PC-3 (cell line): ENCODE measurements at regions of chr2 and their contacts with region 1.

Region 1: DNA sequence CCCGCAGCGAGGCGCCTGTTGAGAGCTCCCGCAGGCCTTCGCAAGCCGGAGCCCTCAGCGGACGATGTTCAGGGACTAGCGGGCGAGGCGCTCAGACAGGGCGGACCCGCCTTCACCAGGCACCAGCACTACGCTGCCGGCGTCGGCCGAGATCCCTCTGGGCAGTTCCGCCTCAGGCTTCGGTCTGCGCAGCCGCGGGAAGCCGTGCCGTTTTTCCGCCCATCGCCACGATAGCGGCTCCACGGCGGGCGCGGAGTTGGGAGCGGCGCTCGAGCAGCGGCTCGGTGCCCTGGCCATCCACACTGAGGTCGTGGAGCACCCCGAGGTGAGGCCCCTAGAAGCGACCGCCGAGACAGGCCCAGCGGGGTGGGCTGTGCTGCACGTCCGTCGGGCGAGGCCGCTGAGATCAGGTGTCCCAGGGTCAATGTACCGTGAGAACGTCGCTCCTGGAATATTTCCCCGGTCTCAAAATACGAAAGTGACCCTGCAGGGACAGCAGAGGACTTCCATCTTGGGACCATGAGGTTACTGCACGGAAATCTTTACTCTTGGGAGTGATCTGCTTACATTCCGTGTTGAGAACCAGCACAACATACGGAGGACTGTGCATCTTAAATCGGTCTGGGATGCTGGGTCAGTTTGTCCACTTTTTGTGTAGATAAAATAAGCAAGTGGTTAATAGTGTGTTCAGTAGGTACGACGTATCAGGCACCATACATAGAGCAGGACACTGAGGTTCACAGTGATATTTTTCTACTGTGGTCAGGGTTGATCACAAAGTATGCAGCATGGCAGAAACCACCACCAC is 13.3 kb upstream of the MTIF2 start:
- DNase-seq: peak; percentile 80
- ATAC-seq: peak; percentile 96
- H3K4me3 ChIP-seq: peak overlapping the region; percentile 84
- H3K27ac ChIP-seq: peak overlapping the region; percentile 57
- H3K4me1 ChIP-seq: peaks cover 17% of the 10 kb centered on the region
- H3K27me3 ChIP-seq: no peaks in the 10 kb centered on the region
- CTCF ChIP-seq: no peak

Region 2: DNA sequence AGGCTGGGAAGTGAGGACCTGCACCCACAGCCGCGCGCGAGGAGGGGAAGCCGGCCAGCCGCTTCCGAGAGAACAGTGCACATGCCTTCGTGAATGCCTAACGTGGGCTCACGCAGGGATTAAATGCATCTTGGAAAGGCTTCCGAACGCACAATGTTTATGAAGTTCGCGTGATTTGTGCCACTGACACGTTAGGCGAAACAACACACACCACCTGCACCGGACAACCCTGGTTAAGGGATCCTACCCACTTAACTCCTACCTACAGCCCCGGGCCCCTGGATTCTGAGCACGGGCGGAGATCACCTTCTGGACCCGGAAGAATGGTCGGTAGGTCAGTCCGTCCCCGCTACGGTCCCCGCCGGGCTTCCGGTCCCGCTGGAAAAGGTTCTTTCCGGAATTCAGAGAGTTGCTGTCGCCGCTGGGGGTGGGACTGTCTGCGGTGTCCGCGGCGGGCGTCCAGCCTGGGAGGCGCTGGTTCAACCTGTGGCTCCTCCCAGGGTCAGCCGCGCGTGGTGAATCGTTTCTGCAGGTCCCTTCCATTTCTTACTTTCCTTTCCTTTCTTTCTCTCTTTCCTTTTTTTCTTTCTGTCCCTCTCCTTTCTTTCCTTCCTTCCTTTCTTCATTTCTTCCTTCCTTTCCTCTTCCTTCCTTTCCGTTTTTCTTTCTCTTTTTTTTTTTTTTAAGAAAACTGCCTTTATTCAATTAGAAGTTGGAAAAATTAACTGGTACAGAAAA is 13.2 kb before region 1 on chr2 and contains the start of gene MTIF2:
- CTCF ChIA-PET with region 1: no interaction called
- POLR2A ChIA-PET with region 1: no interaction called
- intact Hi-C with region 1: loop called (anchors 1 kb)
- DNase-seq: peak; percentile 97
- ATAC-seq: peak; percentile 98
- H3K4me3 ChIP-seq: peak within 1 kb of the TSS; percentile 90
- H3K27ac ChIP-seq: peak within 1 kb of the TSS; percentile 57
- H3K4me1 ChIP-seq: peaks cover 12% of the 10 kb centered on the region
- H3K27me3 ChIP-seq: no peaks in the 10 kb centered on the region
- CTCF ChIP-seq: no peak
- total RNA-seq, gene MTIF2: 46.5 and 49.6 TPM in 2 replicates

Region 3: DNA sequence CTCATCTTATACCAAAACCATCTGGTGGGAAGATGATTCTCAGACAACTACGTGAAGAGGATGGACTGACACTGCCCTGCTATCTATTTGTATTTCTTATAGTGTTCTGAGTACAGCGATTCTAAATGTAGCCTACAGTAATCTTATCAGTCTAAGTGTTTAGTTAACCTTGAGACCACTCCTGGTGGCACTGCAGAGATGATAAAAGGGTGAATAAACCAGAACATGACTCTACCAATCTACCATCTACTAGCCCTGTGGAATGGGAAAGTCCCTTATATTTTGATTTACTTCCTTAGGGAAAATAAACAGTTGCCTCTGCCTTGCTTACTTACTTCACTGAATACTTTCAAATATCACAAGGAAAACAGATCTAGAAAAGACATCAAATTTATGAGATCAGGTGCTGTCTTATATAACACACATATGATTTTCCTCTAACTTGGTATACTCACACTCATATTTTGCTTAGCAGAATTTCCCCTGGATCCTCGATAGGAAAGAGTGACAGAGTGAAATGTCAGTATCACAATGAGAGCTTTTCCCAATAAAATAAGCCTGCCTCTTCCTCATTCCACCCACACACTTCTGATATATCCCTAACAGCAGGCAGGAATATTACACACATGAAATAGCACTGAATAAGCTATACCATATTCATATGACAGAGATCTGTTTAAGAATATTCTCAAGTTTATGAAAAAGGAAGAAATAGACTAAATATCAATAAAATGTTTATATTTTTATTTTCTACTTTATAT is 45.3 kb after region 1 on chr2:
- CTCF ChIA-PET with region 1: no interaction called
- POLR2A ChIA-PET with region 1: no interaction called
- intact Hi-C with region 1: no loop called
- DNase-seq: no peak
- ATAC-seq: no peak
- H3K4me3 ChIP-seq: no peak overlapping the region
- H3K27ac ChIP-seq: no peak overlapping the region
- H3K4me1 ChIP-seq: no peaks in the 10 kb centered on the region
- H3K27me3 ChIP-seq: no peaks in the 10 kb centered on the region
- CTCF ChIP-seq: no peak

Region 4: DNA sequence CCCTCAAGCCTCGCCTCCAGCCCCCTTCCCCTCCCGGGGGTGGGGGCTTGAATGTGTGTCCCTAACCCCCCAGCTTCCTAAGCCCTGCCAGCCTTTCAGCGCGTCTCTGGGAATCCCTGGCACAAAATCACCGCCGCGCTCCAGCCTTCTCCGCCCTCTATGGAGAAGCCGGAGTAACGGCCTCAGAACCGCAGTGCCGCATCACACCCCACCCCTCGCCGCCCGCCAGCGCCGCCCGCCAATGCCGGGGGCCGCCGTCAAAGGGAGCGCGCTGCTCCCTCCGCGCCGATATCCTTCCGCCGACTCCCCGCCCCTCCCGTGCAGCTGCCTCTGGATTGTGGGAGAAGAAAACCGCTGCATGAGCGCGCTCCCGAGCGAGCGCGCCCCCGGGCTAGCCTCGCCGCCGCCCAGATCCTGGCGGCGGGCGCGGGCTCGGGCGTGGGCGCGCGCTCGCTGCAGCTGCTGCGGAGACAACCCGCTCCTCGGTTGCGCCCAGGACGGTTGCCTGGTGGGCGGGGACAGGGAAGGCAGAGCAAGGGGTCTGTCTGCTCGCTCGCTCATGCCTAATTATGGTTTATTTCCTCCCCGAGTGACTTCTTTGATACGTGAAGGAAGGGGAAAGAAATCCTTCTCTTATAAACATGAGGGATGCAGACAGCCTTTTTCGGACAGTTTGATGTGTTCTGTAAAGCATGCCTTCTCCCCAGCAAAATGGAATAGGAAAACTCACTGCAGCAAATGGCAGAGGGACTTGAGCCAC is 137.5 kb after region 1 on chr2 and contains the start of gene CCDC88A:
- CTCF ChIA-PET with region 1: no interaction called
- POLR2A ChIA-PET with region 1: no interaction called
- intact Hi-C with region 1: loop called (anchors 2 kb)
- DNase-seq: peak; percentile 94
- ATAC-seq: peak; percentile 91
- H3K4me3 ChIP-seq: peak within 1 kb of the TSS; percentile 82
- H3K27ac ChIP-seq: no peak within 1 kb of the TSS
- H3K4me1 ChIP-seq: peaks cover 23% of the 10 kb centered on the region
- H3K27me3 ChIP-seq: no peaks in the 10 kb centered on the region
- CTCF ChIP-seq: 0 out of 2 replicates have a peak, but pooled peaks have one; percentile 16
- total RNA-seq, gene CCDC88A: 21.6 and 28.7 TPM in 2 replicates

Region 5: GRCh38 chr2:55437515-55438390 is 155.4 kb after region 1 on chr2:
- CTCF ChIA-PET with region 1: no interaction called
- POLR2A ChIA-PET with region 1: no interaction called
- intact Hi-C with region 1: no loop called
- DNase-seq: no peak
- ATAC-seq: no peak
- H3K4me3 ChIP-seq: no peak overlapping the region
- H3K27ac ChIP-seq: no peak overlapping the region
- H3K4me1 ChIP-seq: no peaks in the 10 kb centered on the region
- H3K27me3 ChIP-seq: no peaks in the 10 kb centered on the region
- CTCF ChIP-seq: no peak

Region 6: DNA sequence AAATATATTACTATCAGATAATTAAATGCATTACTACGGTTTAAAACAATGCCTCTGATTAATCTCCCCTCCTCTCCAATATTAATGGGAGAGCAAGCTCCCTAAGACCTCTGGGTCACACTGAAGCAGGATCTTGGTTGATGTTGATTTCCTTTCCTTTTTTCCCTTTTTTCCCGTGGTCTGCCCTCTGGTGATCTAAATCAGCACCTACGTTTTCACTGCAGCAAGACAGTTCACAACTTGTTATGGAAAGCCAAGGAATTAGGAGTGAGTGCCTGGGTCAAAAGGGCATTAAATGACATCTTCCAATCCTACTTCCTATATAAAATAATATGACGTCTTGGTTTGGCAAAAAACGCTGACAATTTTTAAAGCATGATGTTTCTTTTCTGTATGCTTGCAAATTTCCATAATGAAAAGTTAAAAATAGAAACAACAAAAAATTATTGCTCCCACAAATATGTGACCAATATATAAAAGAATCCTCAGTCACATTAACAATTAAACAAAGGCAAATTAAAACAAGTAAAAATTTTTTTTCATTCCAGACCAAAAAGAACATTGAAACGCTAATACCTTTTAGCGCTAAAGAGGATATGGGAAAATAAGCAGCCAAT is 229.3 kb after region 1 on chr2:
- CTCF ChIA-PET with region 1: no interaction called
- POLR2A ChIA-PET with region 1: no interaction called
- intact Hi-C with region 1: loop called (anchors 5 kb)
- DNase-seq: peak; percentile 73
- ATAC-seq: peak; percentile 84
- H3K4me3 ChIP-seq: no peak overlapping the region
- H3K27ac ChIP-seq: no peak overlapping the region
- H3K4me1 ChIP-seq: no peaks in the 10 kb centered on the region
- H3K27me3 ChIP-seq: no peaks in the 10 kb centered on the region
- CTCF ChIP-seq: peak; percentile 70